BJ (cell line): ENCODE measurements at regions of chr18 and their contacts with region 1.

Region 1: GRCh38 chr18:47204908-47205522 is 28.9 kb upstream of the IER3IP1 start:
- DNase-seq: no peak
- H3K4me3 ChIP-seq: no peak overlapping the region
- H3K27me3 ChIP-seq: no peaks in the 10 kb centered on the region; the same call in 1 of the 2 replicates
- CTCF ChIP-seq: peak; percentile 89

Region 2: DNA sequence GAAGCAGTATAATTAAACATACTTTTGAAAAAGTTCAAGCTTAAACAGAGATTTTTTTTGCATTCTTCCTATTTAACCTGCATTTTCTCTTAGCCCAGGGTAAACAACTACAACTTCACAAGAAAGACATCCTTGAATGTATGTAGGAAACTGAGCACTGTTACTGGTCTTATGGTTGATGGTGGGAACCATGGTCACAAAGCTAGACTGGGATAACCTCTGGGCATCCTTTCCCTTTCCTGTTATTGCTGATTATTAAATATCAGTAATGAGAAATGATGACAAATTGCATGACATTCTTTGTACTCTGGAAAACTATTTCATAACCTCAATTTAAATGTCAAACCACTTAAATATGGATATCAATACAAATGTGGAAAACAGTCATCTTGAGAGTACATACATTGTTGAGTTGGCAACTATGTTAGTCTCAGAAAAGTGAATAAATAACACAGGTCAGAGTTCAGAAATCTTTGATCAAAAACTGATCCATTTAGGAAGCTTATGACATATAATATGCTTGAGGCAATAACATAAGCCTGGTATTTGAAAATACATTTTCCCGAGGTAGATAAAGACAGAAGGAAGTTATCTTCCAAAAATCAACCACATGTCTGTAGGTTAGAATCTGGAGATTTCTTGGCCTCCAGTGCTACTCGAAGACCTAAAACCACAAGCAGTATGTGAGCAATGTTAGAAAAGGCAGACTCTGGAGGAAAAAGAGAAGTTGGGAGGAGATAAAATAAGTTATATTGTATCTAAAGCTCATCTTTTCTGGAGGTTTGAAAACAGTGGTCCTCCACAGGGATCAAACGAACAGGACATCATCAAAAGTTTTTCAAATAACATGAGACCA is 382.9 kb before region 1 on chr18:
- CTCF ChIA-PET with region 1: no interaction called
- POLR2A ChIA-PET with region 1: no interaction called
- DNase-seq: no peak
- H3K4me3 ChIP-seq: no peak overlapping the region
- H3K27me3 ChIP-seq: no peaks in the 10 kb centered on the region
- CTCF ChIP-seq: no peak

Region 3: GRCh38 chr18:47050468-47050867 is 154.5 kb before region 1 on chr18:
- CTCF ChIA-PET with region 1: interaction called, 20 read pairs
- POLR2A ChIA-PET with region 1: no interaction called
- DNase-seq: no peak
- H3K4me3 ChIP-seq: no peak overlapping the region
- H3K27me3 ChIP-seq: no peaks in the 10 kb centered on the region
- CTCF ChIP-seq: peak; percentile 77

Region 4: DNA sequence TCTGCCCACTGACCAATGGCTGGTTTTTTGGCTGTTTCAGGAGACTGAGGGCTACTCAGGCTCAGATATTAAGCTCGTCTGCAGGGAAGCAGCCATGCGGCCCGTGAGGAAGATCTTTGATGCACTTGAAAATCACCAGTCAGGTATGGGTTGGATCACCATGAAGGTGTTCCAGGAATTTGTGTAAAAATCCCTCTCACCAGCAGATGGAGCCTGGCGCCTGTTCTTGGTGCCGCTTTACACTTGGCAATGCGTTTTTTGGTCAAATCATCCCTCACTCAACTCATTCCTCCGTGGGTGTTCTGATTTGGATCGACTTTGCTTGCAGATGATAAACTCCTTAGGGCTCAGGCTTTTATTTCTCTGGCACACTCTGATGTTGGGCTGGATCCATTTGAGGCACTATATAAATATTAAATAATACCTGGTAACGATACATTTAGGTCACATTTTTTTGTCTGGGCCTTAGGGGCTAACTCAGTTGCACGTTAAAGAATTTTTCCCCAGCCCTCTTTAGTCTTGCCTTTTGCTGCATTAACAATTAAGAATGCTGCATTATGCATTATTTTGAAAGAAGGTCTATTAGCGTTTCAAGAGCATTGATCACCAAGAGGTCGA is 104.7 kb before region 1 on chr18:
- CTCF ChIA-PET with region 1: interaction called, 55 read pairs
- POLR2A ChIA-PET with region 1: no interaction called
- DNase-seq: no peak
- H3K4me3 ChIP-seq: no peak overlapping the region
- H3K27me3 ChIP-seq: no peaks in the 10 kb centered on the region
- CTCF ChIP-seq: peak; percentile 77

Region 5: GRCh38 chr18:47191961-47192360 is 13.1 kb before region 1 on chr18:
- CTCF ChIA-PET with region 1: interaction called, 12 read pairs
- POLR2A ChIA-PET with region 1: no interaction called
- DNase-seq: no peak
- H3K4me3 ChIP-seq: no peak overlapping the region
- H3K27me3 ChIP-seq: no peaks in the 10 kb centered on the region
- CTCF ChIP-seq: no peak

Region 6: GRCh38 chr18:47215554-47216138 is 10.6 kb after region 1 on chr18:
- CTCF ChIA-PET with region 1: interaction called, 17 read pairs
- POLR2A ChIA-PET with region 1: no interaction called
- DNase-seq: peak; percentile 4
- H3K4me3 ChIP-seq: no peak overlapping the region
- H3K27me3 ChIP-seq: peaks cover 5% of the 10 kb centered on the region
- CTCF ChIP-seq: peak; percentile 58

Region 7: GRCh38 chr18:47748847-47749599 is 544.0 kb after region 1 on chr18:
- CTCF ChIA-PET with region 1: interaction called, 13 read pairs
- POLR2A ChIA-PET with region 1: no interaction called
- DNase-seq: no peak
- H3K4me3 ChIP-seq: peak overlapping the region; percentile 15; the same call in 1 of the 2 replicates
- H3K27me3 ChIP-seq: peaks cover 4% of the 10 kb centered on the region; the same call in 1 of the 2 replicates
- CTCF ChIP-seq: peak; percentile 84